Caco-2 (cell line): ENCODE measurements at regions of chr2 and their contacts with region 1.

Region 1: DNA sequence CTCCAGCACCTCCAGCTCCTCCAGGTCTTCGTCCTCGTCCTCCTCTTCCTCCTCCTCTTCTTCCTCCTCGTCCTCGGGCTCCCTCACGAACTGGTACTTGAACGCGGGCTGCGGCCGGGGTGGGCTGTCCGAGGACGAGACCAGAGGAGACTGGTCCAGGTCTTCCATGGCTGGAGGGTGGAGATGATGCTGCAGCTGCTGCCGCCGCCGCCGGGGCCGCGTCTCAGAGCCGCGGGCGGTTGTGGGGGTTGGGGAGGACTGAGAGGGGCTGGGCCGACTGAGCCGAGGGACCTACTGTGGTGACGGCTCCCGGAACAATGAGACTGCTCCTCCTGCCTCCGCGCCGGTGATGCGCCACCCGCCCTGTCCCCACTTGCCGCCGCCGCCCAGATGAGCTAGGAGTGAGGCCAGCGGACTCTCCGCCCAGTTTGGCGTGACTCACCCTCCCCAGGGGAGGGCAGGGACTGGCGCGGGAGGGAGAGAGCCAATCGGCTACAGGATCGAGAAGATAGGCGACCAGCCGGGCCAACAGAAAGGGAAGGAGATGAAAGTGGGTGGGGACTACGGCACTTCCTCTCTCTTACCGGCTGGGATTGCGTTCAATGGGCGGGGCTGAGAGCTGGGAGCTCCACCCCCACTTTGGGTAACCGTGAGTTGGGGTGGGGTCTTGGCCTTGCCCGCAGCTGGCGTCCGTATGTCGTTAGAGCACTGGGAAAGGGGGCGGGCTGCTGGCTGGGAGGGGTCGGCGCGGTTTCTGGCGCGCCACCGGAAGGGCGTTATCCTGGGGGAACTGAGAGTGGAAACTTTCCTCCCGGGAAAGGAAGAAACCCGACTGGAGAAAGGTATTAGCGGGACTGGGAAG is at the start of gene RTN4:
- DNase-seq: peak; percentile 99 to 100
- H3K4me3 ChIP-seq: peak within 1 kb of the TSS; percentile 87
- H3K4me3 Mint-ChIP-seq: peak within 1 kb of the TSS; percentile 88
- H3K27ac Mint-ChIP-seq: peak within 1 kb of the TSS; percentile 89
- H3K4me1 ChIP-seq: peaks cover 42% of the 10 kb centered on the region
- H3K4me1 Mint-ChIP-seq: peaks cover 21% of the 10 kb centered on the region
- H3K27me3 ChIP-seq: no peaks in the 10 kb centered on the region
- H3K27me3 Mint-ChIP-seq: no peaks in the 10 kb centered on the region
- CTCF ChIP-seq: no peak
- total RNA-seq, gene RTN4: 231 and 236 TPM in 2 replicates

Region 2: GRCh38 chr2:55014962-55015939 is 35.1 kb before region 1 on chr2:
- CTCF ChIA-PET with region 1: interaction called, 10 read pairs
- POLR2A ChIA-PET with region 1: interaction called, 8 read pairs
- intact Hi-C with region 1: loop called (anchors 1 kb)
- DNase-seq: peak; percentile 77 to 81
- H3K4me3 ChIP-seq: no peak overlapping the region
- H3K4me3 Mint-ChIP-seq: peak overlapping the region; percentile 55
- H3K27ac Mint-ChIP-seq: peak overlapping the region; percentile 55
- H3K4me1 ChIP-seq: peaks cover 55% of the 10 kb centered on the region
- H3K4me1 Mint-ChIP-seq: peaks cover 37% of the 10 kb centered on the region
- H3K27me3 ChIP-seq: no peaks in the 10 kb centered on the region
- H3K27me3 Mint-ChIP-seq: no peaks in the 10 kb centered on the region
- CTCF ChIP-seq: peak; percentile 64 to 75

Region 3: GRCh38 chr2:55109219-55109891 is 59.0 kb after region 1 on chr2:
- CTCF ChIA-PET with region 1: interaction called, 9 read pairs
- POLR2A ChIA-PET with region 1: interaction called, 12 read pairs
- intact Hi-C with region 1: loop called (anchors 1 kb)
- DNase-seq: peak; percentile 79 to 83
- H3K4me3 ChIP-seq: no peak overlapping the region
- H3K4me3 Mint-ChIP-seq: peak overlapping the region; percentile 65
- H3K27ac Mint-ChIP-seq: peak overlapping the region; percentile 99
- H3K4me1 ChIP-seq: peaks cover 64% of the 10 kb centered on the region
- H3K4me1 Mint-ChIP-seq: peaks cover 43% of the 10 kb centered on the region
- H3K27me3 ChIP-seq: no peaks in the 10 kb centered on the region
- H3K27me3 Mint-ChIP-seq: no peaks in the 10 kb centered on the region
- CTCF ChIP-seq: no peak

Region 4: DNA sequence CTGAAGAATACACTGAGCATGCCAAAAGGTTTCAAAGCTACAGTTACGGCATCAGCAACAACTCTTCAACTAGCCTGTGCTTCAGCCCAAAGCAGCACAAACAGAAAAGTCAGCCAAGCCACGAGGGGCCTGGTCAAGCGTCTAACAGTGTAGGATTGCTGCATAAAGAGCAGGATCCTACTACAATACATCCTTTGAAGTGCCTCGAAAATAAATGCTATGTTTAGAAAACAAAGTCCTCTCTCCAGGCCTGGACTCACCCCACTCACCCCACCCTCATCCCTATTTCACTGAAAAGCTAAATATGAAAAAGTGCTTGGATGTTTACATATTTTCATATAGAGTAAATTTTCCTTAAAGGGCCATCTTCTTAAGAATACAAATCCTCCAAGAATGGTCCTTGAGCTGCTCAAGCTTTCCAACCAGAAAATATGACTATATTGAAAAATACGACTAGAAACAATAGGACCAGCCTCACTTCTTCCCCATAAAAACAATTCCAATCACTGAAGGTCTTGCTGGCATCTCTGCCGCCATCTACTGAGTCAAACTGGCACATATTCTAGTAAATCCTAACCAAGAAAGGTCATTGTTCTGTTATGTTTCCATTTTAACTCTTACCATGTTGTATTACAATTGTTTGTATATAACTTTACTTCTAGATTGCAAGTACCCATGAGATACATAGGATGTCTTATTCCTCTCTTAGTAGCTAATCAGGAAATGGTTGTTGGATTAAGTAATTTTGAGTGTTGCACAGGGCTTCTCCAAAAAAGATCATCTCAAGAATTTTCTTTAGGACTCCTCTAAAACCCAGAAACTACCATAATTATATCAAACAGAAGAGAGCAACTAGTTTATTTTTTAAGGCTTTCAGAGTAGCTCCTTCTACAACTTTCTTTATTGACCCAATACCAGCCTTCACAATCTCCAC is 118.1 kb after region 1 on chr2:
- CTCF ChIA-PET with region 1: interaction called, 13 read pairs
- POLR2A ChIA-PET with region 1: interaction called, 4 read pairs
- intact Hi-C with region 1: loop called (anchors 1 kb)
- DNase-seq: peak in 1 of 2 experiments; percentile 61
- H3K4me3 ChIP-seq: no peak overlapping the region
- H3K4me3 Mint-ChIP-seq: no peak overlapping the region
- H3K27ac Mint-ChIP-seq: no peak overlapping the region
- H3K4me1 ChIP-seq: peaks cover 14% of the 10 kb centered on the region
- H3K4me1 Mint-ChIP-seq: peaks cover 17% of the 10 kb centered on the region
- H3K27me3 ChIP-seq: no peaks in the 10 kb centered on the region
- H3K27me3 Mint-ChIP-seq: no peaks in the 10 kb centered on the region
- CTCF ChIP-seq: peak; percentile 68 to 73